Body of pancreas (tissue), 4 donors: ENCODE measurements at regions of chr15 and their contacts with region 1.

Region 1: GRCh38 chr15:74695597-74696397 is at the start of gene EDC3:
- DNase-seq: peak; percentile 81 to 92 (median 86)
- ATAC-seq: peak; percentile 90
- H3K4me3 ChIP-seq: peak within 1 kb of the TSS; percentile 69 to 92
- H3K27ac ChIP-seq: peak within 1 kb of the TSS; percentile 51 to 79 (median 68)
- H3K4me1 ChIP-seq: peaks cover 15% of the 10 kb centered on the region
- H3K27me3 ChIP-seq: no peaks in the 10 kb centered on the region
- CTCF ChIP-seq: peak in 1 of 7 experiments; percentile 17
- POLR2A ChIP-seq: peak in 2 of 3 donors; percentile 54 to 68
- total RNA-seq, gene EDC3: 6.7 to 9.2 TPM

Region 2: GRCh38 chr15:74540761-74541493 is 154.9 kb before region 1 on chr15 and contains the start of gene ARID3B:
- intact Hi-C with region 1: loop called (anchors 10 kb)
- DNase-seq: peak; percentile 98 to 99 (median 99)
- ATAC-seq: peak; percentile 99
- H3K4me3 ChIP-seq: peak within 1 kb of the TSS; percentile 80 to 83
- H3K27ac ChIP-seq: peak within 1 kb of the TSS; percentile 57 to 86 (median 75)
- H3K4me1 ChIP-seq: peaks cover 41% of the 10 kb centered on the region
- H3K27me3 ChIP-seq: no peaks in the 10 kb centered on the region
- CTCF ChIP-seq: no peak
- POLR2A ChIP-seq: peak; percentile 42 to 71 (median 70)
- total RNA-seq, gene ARID3B: 2.9 to 22.4 TPM